Dorsolateral prefrontal cortex (tissue), 120 donors: ENCODE measurements at regions of chr21 and their contacts with region 1.

Region 1: DNA sequence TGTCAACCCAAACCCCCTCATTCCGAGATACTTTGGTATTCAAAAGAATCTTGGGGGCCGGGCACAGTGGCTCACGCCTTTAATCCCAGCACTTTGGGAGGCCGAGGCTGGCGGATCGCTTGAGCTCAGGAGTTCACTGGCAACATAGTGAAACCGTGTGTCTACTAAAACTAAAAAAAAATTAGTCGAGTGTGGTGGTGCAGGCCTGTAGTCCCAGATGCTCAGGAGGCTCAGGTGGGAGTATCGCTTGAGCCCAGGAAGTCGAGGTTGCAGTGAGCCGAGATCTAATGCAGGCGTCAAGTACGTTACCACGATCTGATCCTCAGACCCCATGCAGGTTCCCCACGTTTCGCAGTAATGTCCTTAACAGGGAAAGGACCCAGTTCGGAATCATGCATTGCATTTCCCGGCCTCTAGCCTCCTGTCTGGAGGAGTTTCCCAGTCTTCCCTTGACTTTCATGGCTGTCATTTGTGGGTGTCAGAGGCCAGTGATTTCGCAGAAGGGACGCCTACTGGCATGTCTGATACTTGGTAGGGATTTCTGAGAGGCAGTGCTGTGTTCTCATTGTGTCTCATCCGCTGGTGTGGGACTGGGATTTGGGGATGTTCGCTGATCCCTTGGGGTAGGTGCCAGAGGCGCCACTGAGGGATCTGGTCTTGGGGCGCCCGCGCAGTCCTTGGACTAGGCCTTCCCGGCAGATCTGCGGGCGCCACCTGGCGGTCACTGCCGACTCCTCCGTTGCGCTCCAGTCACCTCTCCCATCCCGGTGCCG is 39.3 kb upstream of the HMGN1 start:
- DNase-seq: peak; percentile 83 to 95 (median 90)
- H3K4me3 ChIP-seq: peak overlapping the region; percentile 28 to 69 (median 57)
- H3K27ac ChIP-seq: peak overlapping the region in 48 of 59 donors; percentile 2 to 95 (median 76)
- H3K27me3 ChIP-seq: no peaks in the 10 kb centered on the region
- CTCF ChIP-seq: peak; percentile 76 to 98 (median 94)

Region 2: GRCh38 chr21:39313571-39314142 is 74.6 kb before region 1 on chr21 and contains the start of gene BRWD1:
- intact Hi-C with region 1: loop called (anchors 1 to 2 kb)
- DNase-seq: peak; percentile 54 to 81 (median 68)
- H3K4me3 ChIP-seq: peak within 1 kb of the TSS; percentile 55 to 98 (median 87)
- H3K27ac ChIP-seq: peak within 1 kb of the TSS; percentile 81 to 100 (median 98)
- H3K27me3 ChIP-seq: no peaks in the 10 kb centered on the region
- CTCF ChIP-seq: peak in 51 of 56 donors; percentile 17 to 63 (median 44)
- total RNA-seq, gene BRWD1: 78.6 to 146 (median 112) TPM

Region 3: GRCh38 chr21:39340687-39341086 is 47.5 kb before region 1 on chr21:
- intact Hi-C with region 1: no loop called
- DNase-seq: no peak
- H3K4me3 ChIP-seq: no peak overlapping the region
- H3K27ac ChIP-seq: no peak overlapping the region
- H3K27me3 ChIP-seq: no peaks in the 10 kb centered on the region
- CTCF ChIP-seq: no peak